ENCODE measurements at regions of chr20 and their contacts with region 1.

Region 1: DNA sequence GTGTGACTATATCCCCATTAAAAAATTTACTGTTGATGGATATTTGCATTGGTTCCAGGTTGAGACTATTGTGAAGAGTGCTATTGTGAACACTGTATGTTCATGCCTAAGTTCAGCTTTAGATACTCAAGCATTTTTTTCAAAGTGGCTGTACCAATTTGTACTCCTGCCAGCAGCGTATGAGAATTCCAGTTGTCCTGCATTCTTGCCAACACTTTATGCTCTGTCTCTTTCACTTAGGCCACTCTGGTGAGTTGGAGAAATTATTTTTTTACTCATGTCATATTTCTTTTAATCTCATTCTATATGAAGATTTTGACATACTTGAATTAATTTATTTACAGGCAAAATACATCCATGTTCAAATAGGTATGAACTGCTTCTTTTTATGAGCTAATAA is 76.2 kb downstream of the JAG1 start:
- DNase-seq: no peak
- H3K4me3 Mint-ChIP-seq: no peak overlapping the region
- H3K27ac Mint-ChIP-seq: no peak overlapping the region
- H3K4me1 Mint-ChIP-seq: peaks cover 13% of the 10 kb centered on the region
- H3K27me3 Mint-ChIP-seq: no peaks in the 10 kb centered on the region

Region 2: DNA sequence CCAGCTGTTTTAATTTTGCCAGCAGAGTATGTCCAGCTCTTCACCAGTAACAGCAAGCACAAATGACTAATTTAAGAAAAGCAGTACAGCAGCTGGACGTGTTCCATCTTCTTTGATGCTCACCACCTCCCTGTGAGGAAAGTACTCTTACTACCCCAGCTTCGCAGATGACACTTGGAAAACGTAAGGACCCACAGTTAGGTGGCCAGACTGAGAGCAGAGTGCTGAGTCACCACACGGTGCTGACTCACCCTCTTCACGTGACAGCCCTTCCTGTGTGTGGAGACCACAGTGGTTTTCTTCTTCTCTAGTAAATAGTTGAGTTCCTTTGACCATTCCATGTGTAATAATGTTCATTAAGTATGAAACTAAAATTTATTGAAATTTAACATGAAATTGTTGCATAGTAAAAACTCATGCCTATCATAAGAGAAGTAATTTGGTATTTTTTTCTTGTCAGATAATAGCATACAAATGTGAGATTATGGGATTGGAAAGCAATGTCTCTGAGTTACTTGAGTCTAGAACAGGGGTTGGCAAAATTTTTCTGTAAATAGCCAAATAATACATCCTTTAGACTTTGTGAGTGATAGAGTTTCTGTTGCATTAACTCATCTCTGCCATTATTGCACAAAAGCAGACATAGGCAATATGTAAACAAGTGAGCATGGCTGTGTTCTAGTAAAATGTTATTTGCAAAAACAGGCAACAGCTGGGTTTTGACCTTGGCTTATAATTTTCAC is 86.0 kb before region 1 on chr20:
- CTCF ChIA-PET with region 1: no interaction called
- intact Hi-C with region 1: loop called (anchors 2 kb)
- DNase-seq: peak; percentile 77
- H3K4me3 Mint-ChIP-seq: no peak overlapping the region
- H3K27ac Mint-ChIP-seq: peak overlapping the region; percentile 56
- H3K4me1 Mint-ChIP-seq: peaks cover 25% of the 10 kb centered on the region
- H3K27me3 Mint-ChIP-seq: no peaks in the 10 kb centered on the region

Region 3: GRCh38 chr20:10521068-10521831 is 76.4 kb before region 1 on chr20:
- CTCF ChIA-PET with region 1: no interaction called
- intact Hi-C with region 1: loop called (anchors 2 kb)
- DNase-seq: no peak
- H3K4me3 Mint-ChIP-seq: no peak overlapping the region
- H3K27ac Mint-ChIP-seq: no peak overlapping the region
- H3K4me1 Mint-ChIP-seq: peaks cover 27% of the 10 kb centered on the region
- H3K27me3 Mint-ChIP-seq: no peaks in the 10 kb centered on the region